ENCODE measurements at regions of chr12 and their contacts with region 1.

Region 1: DNA sequence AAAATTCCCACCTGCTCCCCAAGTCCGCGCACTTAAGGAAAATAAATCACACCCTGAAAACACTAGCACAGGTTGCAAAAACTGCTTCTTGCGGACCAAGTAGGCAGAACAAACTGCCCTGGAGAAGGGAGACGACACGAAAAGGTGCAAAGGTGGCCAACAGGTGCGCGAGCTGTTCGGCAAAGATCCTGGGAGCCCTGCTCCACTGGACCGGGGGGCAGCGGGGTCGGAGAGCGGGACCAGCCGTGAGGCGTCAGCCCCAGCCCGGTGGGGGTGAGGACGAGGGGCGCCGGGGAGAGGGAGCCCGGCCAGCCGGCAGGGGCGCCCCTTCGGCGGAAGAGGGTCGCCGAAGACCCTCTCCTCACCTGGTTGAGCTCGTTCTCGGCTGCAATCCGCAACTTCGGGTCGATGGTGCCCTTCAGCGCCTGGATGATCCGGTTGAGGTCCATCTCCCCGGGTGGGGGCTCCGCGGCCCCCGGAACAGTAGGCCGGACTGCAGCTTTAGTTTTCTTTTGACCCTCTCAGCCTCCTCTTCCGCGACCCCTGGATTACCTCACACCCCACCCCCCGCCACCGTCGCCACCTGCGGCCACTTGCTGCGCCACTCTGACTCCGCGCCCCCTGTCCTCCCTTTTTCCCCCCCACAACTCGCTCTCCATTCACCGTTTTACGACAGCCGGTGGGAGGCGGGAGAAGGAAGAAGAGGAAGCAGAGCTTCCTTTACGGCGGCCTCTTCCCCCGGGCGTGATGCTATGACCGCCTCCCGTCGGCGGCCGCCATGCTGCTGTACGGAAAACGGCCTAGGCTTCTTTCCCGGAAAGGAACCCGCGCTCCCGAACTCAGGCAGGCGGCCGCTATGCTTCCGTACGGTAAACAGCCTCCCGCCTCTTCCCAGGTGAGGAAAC is at the start of gene IPO8:
- DNase-seq: peak; percentile 97
- H3K4me3 ChIP-seq: peak within 1 kb of the TSS; percentile 73 to 98 (median 94)
- H3K27ac ChIP-seq: peak within 1 kb of the TSS; percentile 67 to 88 (median 79)
- H3K4me1 ChIP-seq: peaks cover 15 to 57% (median 36%) of the 10 kb centered on the region in 6 donors
- H3K27me3 ChIP-seq: no peaks in the 10 kb centered on the region
- CTCF ChIP-seq: peak in 9 of 11 experiments; percentile 5 to 53 (median 33)
- POLR2A ChIP-seq: no peak
- total RNA-seq, gene IPO8: 44.5 to 68.2 (median 52.6) TPM

Region 2: DNA sequence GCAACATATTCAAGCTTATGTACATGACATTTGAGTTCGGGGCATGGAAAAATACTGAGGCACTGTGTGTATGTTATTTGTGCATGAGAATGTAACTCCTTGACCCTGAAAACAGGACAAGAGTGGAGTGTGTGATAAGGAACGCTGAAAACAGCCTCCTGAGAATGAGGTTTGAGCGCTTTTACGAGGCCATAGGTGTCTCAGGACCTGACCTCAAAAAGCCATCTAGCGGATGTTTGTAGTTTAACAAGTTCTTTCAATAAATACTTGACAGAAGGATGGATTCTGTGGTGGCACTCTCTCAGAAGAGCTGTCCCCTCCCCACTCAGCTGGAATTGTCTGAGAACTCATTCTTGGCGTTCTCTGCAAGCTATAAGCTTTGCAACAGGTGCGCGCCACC is 561.2 kb before region 1 on chr12:
- intact Hi-C with region 1: no loop called
- DNase-seq: no peak
- H3K4me3 ChIP-seq: no peak overlapping the region
- H3K27ac ChIP-seq: no peak overlapping the region
- H3K4me1 ChIP-seq: no peaks in the 10 kb centered on the region
- H3K27me3 ChIP-seq: no peaks in the 10 kb centered on the region
- CTCF ChIP-seq: no peak
- POLR2A ChIP-seq: no peak

Region 3: GRCh38 chr12:30746190-30746589 is 50.7 kb after region 1 on chr12:
- intact Hi-C with region 1: loop called (anchors 10 kb)
- DNase-seq: no peak
- H3K4me3 ChIP-seq: no peak overlapping the region
- H3K27ac ChIP-seq: no peak overlapping the region
- H3K4me1 ChIP-seq: peaks cover 0 to 13% (median 2%) of the 10 kb centered on the region in 6 donors
- H3K27me3 ChIP-seq: no peaks in the 10 kb centered on the region
- CTCF ChIP-seq: no peak
- POLR2A ChIP-seq: no peak

Measured in spleen (tissue), 13 donors.